ENCODE measurements at regions of chr7 and their contacts with region 1.

Region 1: DNA sequence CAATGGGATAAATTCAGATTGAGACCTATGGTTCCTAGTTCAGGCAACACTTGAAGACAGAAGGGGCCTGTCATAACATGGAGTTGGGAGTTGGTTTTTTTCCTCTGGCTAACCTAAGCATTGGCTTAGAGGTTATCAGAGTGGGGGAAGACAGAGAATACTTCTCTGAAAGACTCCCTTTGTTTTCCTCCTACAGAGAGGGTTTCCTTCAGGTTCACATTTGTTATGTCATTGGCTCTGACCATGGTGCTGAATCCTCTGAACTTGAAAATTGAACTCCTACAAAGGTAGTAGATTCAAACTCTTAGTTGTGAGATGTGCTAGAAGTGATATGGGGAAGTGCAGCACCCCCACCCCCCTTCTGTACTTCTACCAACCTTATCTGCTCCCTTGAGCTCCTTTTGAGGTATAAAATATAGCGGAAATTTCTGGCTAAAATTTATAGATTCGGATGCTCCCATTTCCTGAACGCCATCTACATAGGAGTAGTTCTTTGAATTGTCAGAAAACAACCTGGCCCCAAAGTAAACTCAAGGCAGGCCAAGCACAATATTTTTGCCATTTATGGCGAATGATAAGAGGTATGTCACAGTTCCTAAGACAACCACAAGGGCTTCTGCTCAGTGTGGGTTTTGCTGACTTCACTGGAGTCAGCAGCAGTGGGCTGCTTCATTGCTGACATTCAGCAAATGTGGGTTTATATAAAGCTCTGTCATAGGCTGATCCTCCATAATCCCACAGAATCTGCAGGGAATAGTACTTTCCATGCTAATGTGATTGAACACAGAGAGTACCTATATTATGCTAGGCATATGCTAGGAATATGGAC is 131.6 kb upstream of the KLF14 start:
- DNase-seq: peak; percentile 38
- H3K4me3 Mint-ChIP-seq: no peak overlapping the region
- H3K27ac Mint-ChIP-seq: peak overlapping the region; percentile 85
- H3K4me1 Mint-ChIP-seq: peaks cover 13% of the 10 kb centered on the region
- H3K27me3 Mint-ChIP-seq: no peaks in the 10 kb centered on the region
- CTCF ChIP-seq: no peak

Region 2: DNA sequence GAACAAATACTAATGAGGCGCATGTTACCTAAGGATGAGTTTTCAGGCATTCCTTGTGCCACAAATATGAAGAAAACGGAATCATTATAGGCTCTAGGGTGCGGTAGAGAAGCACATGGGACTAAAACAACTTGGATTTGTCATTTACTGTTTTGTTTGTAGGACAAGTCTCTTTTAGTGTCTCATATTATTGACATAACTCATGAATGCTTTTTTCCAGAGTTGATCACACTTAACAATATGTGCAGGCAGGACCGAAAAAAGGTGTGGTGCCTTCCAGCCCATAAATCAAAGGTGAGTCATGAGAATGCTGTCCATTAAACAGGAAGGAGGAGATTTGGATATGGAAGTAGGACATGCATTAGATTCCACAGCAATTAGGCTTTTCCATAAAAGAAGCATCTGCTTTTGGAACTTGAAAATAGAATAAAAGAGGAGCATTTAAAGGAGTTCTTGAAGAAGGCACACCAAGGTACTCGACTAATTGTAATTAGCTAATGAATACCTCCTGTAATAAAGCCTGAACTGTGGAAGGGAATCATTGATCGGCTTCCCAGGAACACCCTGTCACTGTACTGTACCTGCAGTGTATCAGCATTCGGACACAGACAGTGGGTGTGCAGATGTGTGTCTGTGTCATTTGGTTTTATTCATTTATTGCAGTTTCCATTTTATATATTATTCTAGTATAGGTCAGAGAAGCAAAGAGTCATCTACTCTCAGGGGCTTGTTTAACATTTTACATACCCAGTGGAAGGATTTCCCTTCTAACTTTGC is 11.9 kb before region 1 on chr7:
- CTCF ChIA-PET with region 1: interaction called, 5 read pairs
- POLR2A ChIA-PET with region 1: interaction called, 13 read pairs
- intact Hi-C with region 1: no loop called
- DNase-seq: peak; percentile 84
- H3K4me3 Mint-ChIP-seq: peak overlapping the region; percentile 29
- H3K27ac Mint-ChIP-seq: peak overlapping the region; percentile 24
- H3K4me1 Mint-ChIP-seq: peaks cover 31% of the 10 kb centered on the region
- H3K27me3 Mint-ChIP-seq: no peaks in the 10 kb centered on the region
- CTCF ChIP-seq: no peak

Measured in MCF 10A (cell line).